ENCODE measurements at regions of chr2 and their contacts with region 1.

Region 1: GRCh38 chr2:30165050-30165520 is 18.3 kb downstream of the YPEL5 start:
- DNase-seq: peak; percentile 86 to 87
- H3K4me3 ChIP-seq: no peak overlapping the region
- H3K4me3 Mint-ChIP-seq: no peak overlapping the region
- H3K27ac Mint-ChIP-seq: no peak overlapping the region
- H3K4me1 ChIP-seq: peaks cover 3% of the 10 kb centered on the region; the same call in 1 of the 2 replicates
- H3K4me1 Mint-ChIP-seq: peaks cover 9% of the 10 kb centered on the region
- H3K27me3 ChIP-seq: no peaks in the 10 kb centered on the region
- H3K27me3 Mint-ChIP-seq: no peaks in the 10 kb centered on the region
- CTCF ChIP-seq: peak; percentile 84 to 86

Region 2: GRCh38 chr2:30146438-30147147 is 18.5 kb before region 1 on chr2 and contains the start of gene YPEL5:
- CTCF ChIA-PET with region 1: interaction called, 23 read pairs
- POLR2A ChIA-PET with region 1: interaction called, 4 read pairs
- intact Hi-C with region 1: no loop called
- DNase-seq: peak; percentile 99
- H3K4me3 ChIP-seq: peak within 1 kb of the TSS; percentile 69
- H3K4me3 Mint-ChIP-seq: peak within 1 kb of the TSS; percentile 80
- H3K27ac Mint-ChIP-seq: peak within 1 kb of the TSS; percentile 89
- H3K4me1 ChIP-seq: peaks cover 38% of the 10 kb centered on the region
- H3K4me1 Mint-ChIP-seq: peaks cover 29% of the 10 kb centered on the region
- H3K27me3 ChIP-seq: no peaks in the 10 kb centered on the region
- H3K27me3 Mint-ChIP-seq: peaks cover 4% of the 10 kb centered on the region
- CTCF ChIP-seq: no peak
- total RNA-seq, gene YPEL5: 43.6 and 50.9 TPM in 2 replicates

Region 3: GRCh38 chr2:30217644-30218337 is 52.7 kb after region 1 on chr2:
- CTCF ChIA-PET with region 1: interaction called, 11 read pairs
- POLR2A ChIA-PET with region 1: interaction called, 6 read pairs
- intact Hi-C with region 1: no loop called
- DNase-seq: peak; percentile 95 to 97
- H3K4me3 ChIP-seq: peak overlapping the region; percentile 17
- H3K4me3 Mint-ChIP-seq: peak overlapping the region; percentile 69
- H3K27ac Mint-ChIP-seq: peak overlapping the region; percentile 97
- H3K4me1 ChIP-seq: peaks cover 48% of the 10 kb centered on the region
- H3K4me1 Mint-ChIP-seq: peaks cover 63% of the 10 kb centered on the region
- H3K27me3 ChIP-seq: no peaks in the 10 kb centered on the region
- H3K27me3 Mint-ChIP-seq: no peaks in the 10 kb centered on the region
- CTCF ChIP-seq: no peak

Region 4: DNA sequence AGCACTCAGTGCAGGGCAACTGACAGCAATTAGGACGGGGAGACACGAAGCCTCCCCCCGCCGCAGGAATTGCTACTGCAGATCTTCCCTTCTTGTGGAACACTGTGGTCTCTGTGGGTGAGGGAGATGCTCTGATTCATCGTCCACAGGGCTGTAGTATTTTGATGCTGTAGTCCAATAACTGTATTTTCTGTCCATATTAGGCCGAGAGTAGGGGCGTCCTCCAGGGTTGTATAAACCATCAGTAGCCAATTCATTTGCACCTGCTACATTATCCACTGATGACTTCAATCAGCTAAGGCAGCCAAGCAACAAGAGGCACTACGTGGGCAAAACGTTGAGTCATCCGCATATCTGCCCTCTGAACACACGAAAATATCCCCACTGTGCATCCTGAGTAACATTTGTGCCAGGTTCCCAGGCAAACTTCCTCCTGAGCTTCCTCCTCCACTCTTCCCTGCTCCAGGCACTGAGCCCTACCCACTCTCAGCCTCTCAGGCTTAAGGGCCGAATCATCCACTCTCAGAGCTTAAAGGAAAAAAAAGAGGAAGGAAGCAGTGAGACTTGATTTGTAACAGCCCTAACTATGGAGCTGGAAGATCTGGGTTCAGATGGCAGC is 128.3 kb after region 1 on chr2:
- CTCF ChIA-PET with region 1: no interaction called
- POLR2A ChIA-PET with region 1: no interaction called
- intact Hi-C with region 1: no loop called
- DNase-seq: no peak
- H3K4me3 ChIP-seq: no peak overlapping the region
- H3K4me3 Mint-ChIP-seq: no peak overlapping the region
- H3K27ac Mint-ChIP-seq: no peak overlapping the region
- H3K4me1 ChIP-seq: no peaks in the 10 kb centered on the region
- H3K4me1 Mint-ChIP-seq: no peaks in the 10 kb centered on the region
- H3K27me3 ChIP-seq: no peaks in the 10 kb centered on the region
- H3K27me3 Mint-ChIP-seq: no peaks in the 10 kb centered on the region
- CTCF ChIP-seq: no peak

Region 5: GRCh38 chr2:30447149-30448045 is 282.3 kb after region 1 on chr2 and contains the start of gene LCLAT1:
- CTCF ChIA-PET with region 1: interaction called, 4 read pairs
- POLR2A ChIA-PET with region 1: no interaction called
- intact Hi-C with region 1: loop called (anchors 10 kb)
- DNase-seq: peak; percentile 80 to 88
- H3K4me3 ChIP-seq: peak within 1 kb of the TSS; percentile 90
- H3K4me3 Mint-ChIP-seq: peak within 1 kb of the TSS; percentile 97
- H3K27ac Mint-ChIP-seq: peak within 1 kb of the TSS; percentile 100
- H3K4me1 ChIP-seq: peaks cover 12% of the 10 kb centered on the region; the same call in 1 of the 2 replicates
- H3K4me1 Mint-ChIP-seq: peaks cover 6% of the 10 kb centered on the region
- H3K27me3 ChIP-seq: no peaks in the 10 kb centered on the region
- H3K27me3 Mint-ChIP-seq: no peaks in the 10 kb centered on the region
- CTCF ChIP-seq: peak in 1 of 2 experiments; percentile 2
- total RNA-seq, gene LCLAT1: 52.2 and 55.8 TPM in 2 replicates

Region 6: DNA sequence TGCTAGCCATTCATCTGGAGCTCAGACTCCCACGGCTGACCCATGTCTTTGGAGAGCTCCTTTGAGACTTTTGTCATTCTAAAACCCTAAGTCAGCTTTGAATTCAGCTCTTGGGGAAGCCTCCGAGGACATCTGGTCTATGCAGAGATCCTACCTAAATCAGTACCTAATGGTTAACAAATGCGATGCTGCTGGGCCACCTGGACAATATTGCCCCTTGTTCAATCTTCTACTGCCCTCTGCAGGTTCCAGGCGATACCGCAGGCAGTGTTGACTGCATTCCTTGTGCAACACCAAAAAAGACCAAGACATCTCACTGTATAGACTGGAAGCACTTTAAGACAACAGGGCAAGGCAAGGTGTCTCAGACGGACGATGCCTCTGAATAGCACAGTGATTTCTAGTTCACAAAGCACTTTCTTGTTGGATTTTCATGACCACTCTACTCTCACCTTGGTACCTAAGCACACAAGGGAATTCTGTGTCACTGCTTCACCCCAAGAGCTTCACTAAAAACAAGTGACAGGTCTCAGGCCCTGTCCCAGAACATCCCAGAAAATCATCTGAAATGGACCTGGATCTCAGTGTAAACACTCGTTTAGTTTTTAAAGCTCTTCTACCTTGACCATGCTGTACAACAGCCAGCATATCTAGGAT is 1168.6 kb after region 1 on chr2:
- CTCF ChIA-PET with region 1: interaction called, 3 read pairs
- POLR2A ChIA-PET with region 1: no interaction called
- intact Hi-C with region 1: loop called (anchors 1 kb)
- DNase-seq: peak; percentile 82 to 86
- H3K4me3 ChIP-seq: no peak overlapping the region
- H3K4me3 Mint-ChIP-seq: no peak overlapping the region
- H3K27ac Mint-ChIP-seq: no peak overlapping the region
- H3K4me1 ChIP-seq: no peaks in the 10 kb centered on the region
- H3K4me1 Mint-ChIP-seq: no peaks in the 10 kb centered on the region
- H3K27me3 ChIP-seq: no peaks in the 10 kb centered on the region; the same call in 1 of the 2 replicates
- H3K27me3 Mint-ChIP-seq: no peaks in the 10 kb centered on the region
- CTCF ChIP-seq: peak; percentile 91 to 98